AG04449 (cell line): ENCODE measurements at regions of chr16 and their contacts with region 1.

Region 1: DNA sequence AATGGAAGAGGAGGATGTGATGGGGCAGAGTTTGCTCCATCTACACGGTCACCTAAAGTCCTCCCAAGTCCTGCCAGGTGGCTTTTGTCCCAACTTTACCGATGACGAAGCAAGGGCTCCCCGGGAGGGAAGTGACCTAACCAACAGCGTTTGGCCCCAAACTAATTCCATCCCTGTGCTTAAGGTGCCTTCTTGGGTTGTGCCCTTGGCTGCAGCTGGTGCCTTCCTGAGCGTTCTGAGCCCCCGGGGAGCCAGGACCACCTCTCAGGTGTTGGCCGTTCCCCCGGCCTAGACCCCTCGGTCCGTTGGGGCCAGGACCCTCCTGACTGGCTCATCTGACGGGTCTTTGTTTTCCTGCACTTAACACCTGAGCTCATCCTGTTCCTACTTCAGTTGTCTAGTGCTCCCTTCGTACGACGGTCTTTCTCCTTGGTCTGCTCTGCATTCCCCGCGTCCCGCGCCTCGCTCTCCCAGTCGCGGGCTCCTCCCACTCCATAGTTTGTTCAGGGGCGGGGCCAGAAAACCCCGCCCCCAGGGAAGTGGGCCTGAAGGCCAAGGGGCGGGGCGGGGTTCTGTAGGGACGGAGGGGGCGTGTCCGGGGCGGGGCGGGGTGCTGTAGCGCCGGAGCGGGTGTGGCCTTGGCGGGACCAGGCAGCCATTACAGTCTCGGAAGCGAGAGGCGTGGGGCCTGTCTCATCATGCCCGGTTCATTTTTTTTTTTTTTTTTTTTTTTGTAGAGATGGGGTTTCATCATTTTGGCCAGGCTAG is 822 bp upstream of the ZSCAN10 start:
- DNase-seq: peak; percentile 9
- H3K4me3 ChIP-seq: peak overlapping the region; percentile 33
- CTCF ChIP-seq: no peak

Region 2: DNA sequence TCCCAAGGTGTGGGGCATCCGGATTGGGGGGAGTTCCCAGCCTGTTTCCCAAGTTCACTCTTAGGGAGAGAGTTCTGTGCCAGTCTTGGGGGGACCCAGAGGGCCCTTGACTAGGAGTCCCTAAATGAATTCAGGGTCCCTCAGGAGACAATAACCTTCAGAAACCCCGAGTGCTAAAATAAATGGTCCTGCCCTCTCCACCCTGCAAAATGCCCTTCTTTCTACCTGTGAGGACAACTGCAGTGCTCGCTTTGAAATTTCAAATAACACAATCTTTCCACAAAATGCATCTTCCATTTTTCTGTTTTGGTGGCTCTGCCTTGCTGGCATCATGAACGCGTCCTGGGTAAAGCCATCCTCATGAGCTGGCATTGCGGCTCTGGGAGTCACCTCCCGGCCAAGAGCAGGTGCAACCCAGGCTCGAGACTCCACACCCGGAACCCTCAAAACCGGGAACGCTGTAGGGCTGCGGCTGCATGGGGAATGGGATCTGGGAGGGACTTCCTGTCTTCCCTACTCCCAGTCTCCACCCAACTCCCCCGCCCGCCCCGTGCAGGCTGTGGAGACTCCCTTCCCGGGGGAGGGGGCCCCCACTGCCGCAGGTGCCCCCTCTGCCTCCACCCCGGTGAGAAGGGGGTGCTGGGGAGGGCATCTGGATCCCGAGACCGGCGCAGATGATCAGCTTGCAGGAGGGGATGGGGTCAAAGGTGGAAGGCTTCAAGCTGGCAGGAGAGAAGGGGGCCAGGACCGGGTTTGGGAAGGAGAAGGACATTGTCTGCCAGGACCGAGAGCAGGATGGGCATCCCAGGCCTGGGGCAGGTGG is 12.4 kb after region 1 on chr16 and contains the start of gene ZNF205:
- CTCF ChIA-PET with region 1: interaction called, 15 read pairs
- POLR2A ChIA-PET with region 1: no interaction called
- DNase-seq: no peak
- H3K4me3 ChIP-seq: peak within 1 kb of the TSS; percentile 95
- CTCF ChIP-seq: no peak